Activated CD8-positive, alpha-beta T cell treated with anti-CD3 and anti-CD28 coated beads for 36 hours (primary cell): ENCODE measurements at regions of chr1 and their contacts with region 1.

Region 1: GRCh38 chr1:207134581-207134980 is 30.5 kb downstream of the C4BPA start:
- DNase-seq: no peak
- ATAC-seq: no peak
- H3K4me3 Mint-ChIP-seq: no peak overlapping the region
- H3K27ac Mint-ChIP-seq: no peak overlapping the region
- H3K4me1 Mint-ChIP-seq: no peaks in the 10 kb centered on the region
- H3K27me3 Mint-ChIP-seq: no peaks in the 10 kb centered on the region
- CTCF ChIP-seq: no peak

Region 2: GRCh38 chr1:207084701-207085180 is 49.8 kb before region 1 on chr1:
- CTCF ChIA-PET with region 1: no interaction called
- POLR2A ChIA-PET with region 1: no interaction called
- intact Hi-C with region 1: loop called (anchors 2 kb)
- DNase-seq: peak; percentile 73
- ATAC-seq: peak; percentile 83
- H3K4me3 Mint-ChIP-seq: no peak overlapping the region
- H3K27ac Mint-ChIP-seq: no peak overlapping the region
- H3K4me1 Mint-ChIP-seq: peaks cover 25% of the 10 kb centered on the region
- H3K27me3 Mint-ChIP-seq: peaks cover 2% of the 10 kb centered on the region
- CTCF ChIP-seq: peak; percentile 70

Region 3: GRCh38 chr1:207188901-207189300 is 54.3 kb after region 1 on chr1:
- CTCF ChIA-PET with region 1: no interaction called
- POLR2A ChIA-PET with region 1: no interaction called
- intact Hi-C with region 1: no loop called
- DNase-seq: no peak
- ATAC-seq: no peak
- H3K4me3 Mint-ChIP-seq: no peak overlapping the region
- H3K27ac Mint-ChIP-seq: no peak overlapping the region
- H3K4me1 Mint-ChIP-seq: no peaks in the 10 kb centered on the region
- H3K27me3 Mint-ChIP-seq: peaks cover 8% of the 10 kb centered on the region
- CTCF ChIP-seq: no peak